Activated CD8-positive, alpha-beta T cell treated with anti-CD3 and anti-CD28 coated beads for 36 hours (primary cell): ENCODE measurements at regions of chr11 and their contacts with region 1.

Region 1: GRCh38 chr11:83156150-83156995 is 558 bp upstream of the PCF11 start:
- DNase-seq: peak; percentile 99
- ATAC-seq: peak; percentile 91
- H3K4me3 Mint-ChIP-seq: peak overlapping the region; percentile 100
- H3K27ac Mint-ChIP-seq: peak overlapping the region; percentile 100
- H3K4me1 Mint-ChIP-seq: peaks cover 20% of the 10 kb centered on the region
- H3K27me3 Mint-ChIP-seq: no peaks in the 10 kb centered on the region
- CTCF ChIP-seq: no peak

Region 2: DNA sequence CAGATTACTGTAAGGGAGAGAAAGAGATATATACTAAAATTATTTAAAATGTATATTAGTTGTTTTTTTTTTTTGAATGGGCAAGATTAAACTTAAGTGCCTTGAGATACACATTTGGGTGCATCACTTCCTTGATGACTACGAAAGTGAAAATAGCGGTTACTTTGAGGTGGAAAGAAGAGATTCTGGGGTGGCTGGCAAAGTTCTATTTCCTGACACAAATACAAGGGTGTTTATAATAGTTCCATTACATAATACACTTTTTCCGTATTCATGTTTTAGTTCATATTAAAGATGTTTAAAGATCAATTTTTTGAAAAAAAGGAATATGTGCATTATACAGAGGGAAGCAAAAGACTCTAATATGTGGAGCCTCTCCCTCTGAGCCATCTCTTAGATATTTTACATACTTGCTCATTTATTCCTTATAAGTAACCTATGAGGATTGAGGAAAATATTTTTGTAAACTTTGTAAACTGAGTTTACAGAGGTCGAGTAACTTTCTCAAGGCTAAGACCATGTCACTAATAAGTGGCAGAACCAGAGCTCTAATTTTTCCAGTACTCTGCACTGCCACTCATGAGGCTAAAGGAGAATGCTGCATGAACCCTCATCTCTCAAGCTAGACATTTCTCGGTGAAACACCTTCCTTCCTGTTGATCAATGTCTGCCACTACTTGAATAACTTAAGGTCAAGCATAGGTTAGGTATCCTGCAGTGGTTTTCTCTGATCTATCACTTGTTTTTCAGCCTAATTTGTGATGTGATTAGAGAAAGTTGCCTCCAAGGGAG is 196.2 kb before region 1 on chr11:
- CTCF ChIA-PET with region 1: interaction called, 3 read pairs
- POLR2A ChIA-PET with region 1: interaction called, 4 read pairs
- intact Hi-C with region 1: loop called (anchors 5 kb)
- DNase-seq: peak; percentile 65
- ATAC-seq: peak; percentile 82
- H3K4me3 Mint-ChIP-seq: peak overlapping the region; percentile 42
- H3K27ac Mint-ChIP-seq: peak overlapping the region; percentile 62
- H3K4me1 Mint-ChIP-seq: peaks cover 82% of the 10 kb centered on the region
- H3K27me3 Mint-ChIP-seq: no peaks in the 10 kb centered on the region
- CTCF ChIP-seq: no peak

Region 3: DNA sequence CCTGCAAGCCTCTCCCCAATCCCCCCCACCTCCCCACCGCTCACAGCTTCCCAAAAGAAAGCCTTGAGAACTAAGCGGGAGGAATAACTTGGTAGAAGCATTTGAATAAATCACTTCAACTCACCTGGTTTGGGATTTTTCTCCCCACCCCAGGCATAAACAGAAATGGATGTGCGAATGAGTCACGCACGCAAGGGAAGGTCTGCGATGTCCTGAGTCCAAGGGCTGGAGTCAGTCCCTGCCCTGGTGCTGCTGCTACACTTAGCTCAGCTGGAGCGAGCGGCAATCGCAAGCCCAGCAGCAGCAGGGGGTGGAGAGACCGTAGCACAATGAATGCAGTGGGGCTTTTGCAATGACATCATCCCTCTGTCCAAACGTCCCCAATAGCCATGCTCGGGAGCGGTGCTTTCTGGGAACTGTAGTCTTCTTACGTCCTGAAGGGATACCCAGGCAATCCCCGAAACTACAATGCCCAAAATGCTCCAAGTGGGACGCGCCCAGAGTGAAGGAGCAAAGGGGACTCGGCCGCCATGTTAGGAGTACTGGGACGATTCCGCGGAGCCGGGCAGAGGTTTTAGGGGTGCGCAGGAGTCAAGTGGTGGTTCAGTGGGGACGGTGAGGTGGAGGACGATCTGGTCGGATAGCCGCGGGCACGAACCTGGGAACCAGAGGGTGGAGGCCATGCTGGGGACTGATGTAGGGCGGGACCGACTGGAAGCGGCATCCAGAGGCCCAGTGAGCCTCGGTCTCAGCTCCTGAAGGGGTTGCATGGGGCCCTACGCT is 84.6 kb before region 1 on chr11 and contains the start of gene RAB30:
- CTCF ChIA-PET with region 1: interaction called, 8 read pairs
- POLR2A ChIA-PET with region 1: interaction called, 44 read pairs
- intact Hi-C with region 1: loop called (anchors 2 kb)
- DNase-seq: peak; percentile 98
- ATAC-seq: peak; percentile 98
- H3K4me3 Mint-ChIP-seq: no peak within 1 kb of the TSS
- H3K27ac Mint-ChIP-seq: no peak within 1 kb of the TSS
- H3K4me1 Mint-ChIP-seq: peaks cover 45% of the 10 kb centered on the region
- H3K27me3 Mint-ChIP-seq: no peaks in the 10 kb centered on the region
- CTCF ChIP-seq: no peak
- total RNA-seq, gene RAB30: 9.8 to 10.9 TPM

Region 4: GRCh38 chr11:83172551-83172950 is 16.2 kb after region 1 on chr11:
- CTCF ChIA-PET with region 1: interaction called, 5 read pairs
- POLR2A ChIA-PET with region 1: interaction called, 10 read pairs
- intact Hi-C with region 1: no loop called
- DNase-seq: no peak
- ATAC-seq: no peak
- H3K4me3 Mint-ChIP-seq: no peak overlapping the region
- H3K27ac Mint-ChIP-seq: peak overlapping the region; percentile 34
- H3K4me1 Mint-ChIP-seq: peaks cover 79% of the 10 kb centered on the region
- H3K27me3 Mint-ChIP-seq: no peaks in the 10 kb centered on the region
- CTCF ChIP-seq: no peak